CD8-positive, alpha-beta T cell (primary cell): ENCODE measurements at regions of chr19 and their contacts with region 1.

Region 1: GRCh38 chr19:14006243-14006765 is at the start of gene RFX1:
- DNase-seq: peak; percentile 99 to 100 (median 100)
- ATAC-seq: peak; percentile 69
- H3K4me3 ChIP-seq: peak within 1 kb of the TSS; percentile 87 to 92
- H3K4me3 Mint-ChIP-seq: peak within 1 kb of the TSS; percentile 89
- H3K27ac ChIP-seq: peak within 1 kb of the TSS; percentile 99 to 100
- H3K27ac Mint-ChIP-seq: peak within 1 kb of the TSS; percentile 98
- H3K4me1 ChIP-seq: peaks cover 40% of the 10 kb centered on the region
- H3K4me1 Mint-ChIP-seq: peaks cover 42% of the 10 kb centered on the region
- H3K27me3 ChIP-seq: no peaks in the 10 kb centered on the region
- H3K27me3 Mint-ChIP-seq: no peaks in the 10 kb centered on the region
- CTCF ChIP-seq: no peak
- total RNA-seq, gene RFX1: 11.2 to 13.0 TPM

Region 2: GRCh38 chr19:13774217-13775191 is 231.8 kb before region 1 on chr19 and contains the start of gene C19orf53:
- CTCF ChIA-PET with region 1: no interaction called
- POLR2A ChIA-PET with region 1: no interaction called
- intact Hi-C with region 1: loop called in 1 of 2 experiments (anchors 1 kb)
- DNase-seq: peak; percentile 66 to 94 (median 87)
- ATAC-seq: peak; percentile 96
- H3K4me3 ChIP-seq: peak within 1 kb of the TSS; percentile 89 to 91
- H3K4me3 Mint-ChIP-seq: peak within 1 kb of the TSS; percentile 99
- H3K27ac ChIP-seq: peak within 1 kb of the TSS; percentile 83 to 85
- H3K27ac Mint-ChIP-seq: peak within 1 kb of the TSS; percentile 97
- H3K4me1 ChIP-seq: peaks cover 17% of the 10 kb centered on the region
- H3K4me1 Mint-ChIP-seq: peaks cover 25% of the 10 kb centered on the region
- H3K27me3 ChIP-seq: no peaks in the 10 kb centered on the region
- H3K27me3 Mint-ChIP-seq: no peaks in the 10 kb centered on the region
- CTCF ChIP-seq: no peak
- total RNA-seq, gene C19orf53: 116 TPM

Region 3: GRCh38 chr19:13846557-13847406 is 159.5 kb before region 1 on chr19:
- CTCF ChIA-PET with region 1: no interaction called
- POLR2A ChIA-PET with region 1: no interaction called
- intact Hi-C with region 1: loop called (anchors 1 kb)
- DNase-seq: peak; percentile 90 to 99 (median 97)
- ATAC-seq: peak; percentile 54
- H3K4me3 ChIP-seq: peak overlapping the region; percentile 55 to 68
- H3K4me3 Mint-ChIP-seq: peak overlapping the region; percentile 89
- H3K27ac ChIP-seq: peak overlapping the region; percentile 98 to 99
- H3K27ac Mint-ChIP-seq: peak overlapping the region; percentile 100
- H3K4me1 ChIP-seq: peaks cover 65% of the 10 kb centered on the region
- H3K4me1 Mint-ChIP-seq: peaks cover 56% of the 10 kb centered on the region
- H3K27me3 ChIP-seq: no peaks in the 10 kb centered on the region
- H3K27me3 Mint-ChIP-seq: no peaks in the 10 kb centered on the region
- CTCF ChIP-seq: no peak

Region 4: DNA sequence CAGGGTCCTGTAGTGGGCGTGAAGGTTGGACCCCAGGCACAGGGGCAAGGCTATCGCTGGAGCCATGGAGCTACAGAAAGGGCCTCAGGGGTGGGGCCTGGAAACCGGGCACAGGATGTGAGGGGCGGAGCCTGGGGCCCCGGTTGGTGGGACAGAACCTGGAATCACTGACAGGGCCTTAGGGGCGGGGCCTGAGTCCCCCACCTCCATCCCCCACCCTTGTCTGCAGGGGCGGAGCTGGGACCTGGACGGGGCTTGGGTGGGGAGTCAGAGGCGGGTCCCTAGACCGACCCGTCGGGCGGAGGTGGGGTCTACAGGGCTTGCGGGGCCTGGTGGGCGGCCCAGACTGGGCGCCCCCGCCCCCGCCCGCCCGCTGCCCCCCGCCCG is 28.0 kb before region 1 on chr19:
- CTCF ChIA-PET with region 1: interaction called, 3 read pairs
- POLR2A ChIA-PET with region 1: interaction called, 6 read pairs
- intact Hi-C with region 1: loop called in 1 of 2 experiments (anchors 5 kb)
- DNase-seq: peak in 5 of 9 experiments; percentile 28 to 51 (median 42)
- ATAC-seq: peak; percentile 46
- H3K4me3 ChIP-seq: no peak overlapping the region
- H3K4me3 Mint-ChIP-seq: peak overlapping the region; percentile 61
- H3K27ac ChIP-seq: peak overlapping the region in 1 of 2 experiments; percentile 9
- H3K27ac Mint-ChIP-seq: peak overlapping the region; percentile 82
- H3K4me1 ChIP-seq: peaks cover 51% of the 10 kb centered on the region
- H3K4me1 Mint-ChIP-seq: peaks cover 41% of the 10 kb centered on the region
- H3K27me3 ChIP-seq: no peaks in the 10 kb centered on the region
- H3K27me3 Mint-ChIP-seq: no peaks in the 10 kb centered on the region
- CTCF ChIP-seq: no peak

Region 5: DNA sequence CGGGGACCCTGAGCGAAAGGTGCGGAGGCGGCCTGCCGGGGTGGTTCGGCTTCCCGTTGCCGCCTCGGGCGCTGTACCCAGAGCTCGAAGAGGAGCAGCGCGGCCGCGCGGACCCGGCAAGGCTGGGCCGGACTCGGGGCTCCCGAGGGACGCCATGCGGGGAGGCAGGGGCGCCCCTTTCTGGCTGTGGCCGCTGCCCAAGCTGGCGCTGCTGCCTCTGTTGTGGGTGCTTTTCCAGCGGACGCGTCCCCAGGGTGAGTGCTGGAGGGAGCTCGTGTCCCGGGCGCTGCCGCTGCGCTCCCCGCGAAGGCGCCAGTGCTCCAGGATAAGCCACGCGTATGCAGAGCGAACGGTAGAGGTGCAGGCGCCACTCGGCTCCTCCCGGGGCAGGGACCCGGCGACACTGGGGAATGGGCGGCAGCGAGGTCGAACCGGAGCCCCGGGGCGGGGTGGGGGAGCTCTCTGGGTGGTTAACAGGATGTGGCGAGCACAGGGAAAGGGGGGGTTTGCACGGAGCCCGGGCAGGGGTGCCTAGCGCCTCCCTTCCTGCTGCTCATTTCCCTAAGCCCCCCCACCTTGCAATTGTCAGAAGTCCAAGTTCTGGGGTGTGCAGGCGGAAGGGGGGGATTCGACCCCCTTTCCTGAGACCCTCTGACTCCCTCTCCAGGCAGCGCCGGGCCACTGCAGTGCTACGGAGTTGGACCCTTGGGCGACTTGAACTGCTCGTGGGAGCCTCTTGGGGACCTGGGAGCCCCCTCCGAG is 25.6 kb after region 1 on chr19 and contains the start of gene IL27RA:
- CTCF ChIA-PET with region 1: interaction called, 4 read pairs
- POLR2A ChIA-PET with region 1: interaction called, 85 read pairs
- intact Hi-C with region 1: loop called (anchors 1 kb)
- DNase-seq: peak; percentile 64 to 94 (median 87)
- ATAC-seq: peak; percentile 75
- H3K4me3 ChIP-seq: peak within 1 kb of the TSS; percentile 60 to 97
- H3K4me3 Mint-ChIP-seq: peak within 1 kb of the TSS; percentile 92
- H3K27ac ChIP-seq: peak within 1 kb of the TSS; percentile 80 to 95
- H3K27ac Mint-ChIP-seq: peak within 1 kb of the TSS; percentile 94
- H3K4me1 ChIP-seq: peaks cover 26% of the 10 kb centered on the region
- H3K4me1 Mint-ChIP-seq: peaks cover 32% of the 10 kb centered on the region
- H3K27me3 ChIP-seq: no peaks in the 10 kb centered on the region
- H3K27me3 Mint-ChIP-seq: no peaks in the 10 kb centered on the region
- CTCF ChIP-seq: peak; percentile 50
- total RNA-seq, gene IL27RA: 25.4 to 25.7 TPM

Region 6: GRCh38 chr19:14081325-14082093 is 75.2 kb after region 1 on chr19:
- CTCF ChIA-PET with region 1: interaction called, 3 read pairs
- POLR2A ChIA-PET with region 1: no interaction called
- intact Hi-C with region 1: loop called (anchors 1 to 2 kb)
- DNase-seq: peak; percentile 98 to 100 (median 99)
- ATAC-seq: peak; percentile 93
- H3K4me3 ChIP-seq: peak overlapping the region; percentile 77 to 89
- H3K4me3 Mint-ChIP-seq: peak overlapping the region; percentile 91
- H3K27ac ChIP-seq: peak overlapping the region; percentile 60 to 83
- H3K27ac Mint-ChIP-seq: peak overlapping the region; percentile 90
- H3K4me1 ChIP-seq: peaks cover 17% of the 10 kb centered on the region
- H3K4me1 Mint-ChIP-seq: peaks cover 20% of the 10 kb centered on the region
- H3K27me3 ChIP-seq: no peaks in the 10 kb centered on the region
- H3K27me3 Mint-ChIP-seq: no peaks in the 10 kb centered on the region
- CTCF ChIP-seq: no peak